Activated T-helper 1 cell treated with anti-CD3 and anti-CD28 coated beads, Interleukin-12 subunit alpha, Interleukin-12 subunit beta, Interleukin-2, Interleukin-4 antibody, amounts not matched to agents 30 ng/mL and 10 ng/mL and 1 ng/mL, durations not matched to agents 14 hours and 24 hours and 36 hours (primary cell): ENCODE measurements at regions of chr14 and their contacts with region 1.

Region 1: DNA sequence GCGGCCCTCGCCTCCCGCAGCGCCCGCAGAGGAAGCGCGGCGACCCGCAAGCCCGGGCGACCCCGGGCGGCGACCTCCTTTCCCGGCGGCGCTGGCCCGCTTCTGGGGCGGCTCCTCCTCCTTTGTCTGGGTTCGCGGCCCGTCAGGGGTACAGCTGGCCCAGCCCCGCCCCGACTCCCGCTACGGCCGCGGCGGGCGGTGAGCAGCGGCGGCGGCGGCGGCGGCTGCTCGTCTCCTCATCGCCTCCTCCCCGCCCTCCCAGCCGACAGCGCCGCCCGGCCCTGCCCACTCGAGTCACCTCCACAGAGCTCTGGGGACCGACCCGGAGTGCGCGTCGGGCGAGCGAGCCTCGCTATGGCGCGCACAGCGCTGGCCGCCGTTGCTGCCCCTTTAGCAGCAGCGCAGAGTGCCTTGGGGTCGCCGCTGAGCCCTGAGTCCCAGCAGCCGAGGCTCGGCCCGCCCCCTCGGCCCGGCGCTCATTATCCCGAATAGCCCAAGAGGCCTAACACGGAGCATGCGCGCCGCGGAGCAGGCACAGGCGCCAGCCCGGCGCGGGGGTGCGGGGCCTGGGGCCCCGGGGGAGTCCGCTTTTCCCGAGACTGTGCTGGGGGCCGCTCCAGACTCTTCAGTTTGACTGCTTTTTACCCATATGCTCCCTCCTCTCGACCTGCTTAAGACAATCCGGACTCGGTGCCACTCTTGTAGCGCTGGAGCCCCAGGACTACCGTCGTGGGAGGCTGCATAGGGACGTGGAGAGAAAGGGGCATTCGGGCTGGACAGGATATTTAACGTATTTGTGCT is at the start of gene SOS2:
- DNase-seq: peak; percentile 82
- H3K4me3 Mint-ChIP-seq: peak within 1 kb of the TSS; percentile 86
- H3K27ac Mint-ChIP-seq: peak within 1 kb of the TSS; percentile 89
- H3K4me1 Mint-ChIP-seq: peaks cover 44% of the 10 kb centered on the region
- H3K27me3 Mint-ChIP-seq: no peaks in the 10 kb centered on the region
- total RNA-seq, gene SOS2: 19.9 and 21.6 TPM in 2 replicates

Region 2: GRCh38 chr14:49585803-49586672 is 645.6 kb before region 1 on chr14 and contains the start of gene RPS29:
- intact Hi-C with region 1: loop called (anchors 5 kb)
- DNase-seq: peak; percentile 97
- H3K4me3 Mint-ChIP-seq: peak within 1 kb of the TSS; percentile 93
- H3K27ac Mint-ChIP-seq: peak within 1 kb of the TSS; percentile 99
- H3K4me1 Mint-ChIP-seq: peaks cover 46% of the 10 kb centered on the region
- H3K27me3 Mint-ChIP-seq: peaks cover 3% of the 10 kb centered on the region
- total RNA-seq, gene RPS29: 1,860 and 1,913 TPM in 2 replicates

Region 3: DNA sequence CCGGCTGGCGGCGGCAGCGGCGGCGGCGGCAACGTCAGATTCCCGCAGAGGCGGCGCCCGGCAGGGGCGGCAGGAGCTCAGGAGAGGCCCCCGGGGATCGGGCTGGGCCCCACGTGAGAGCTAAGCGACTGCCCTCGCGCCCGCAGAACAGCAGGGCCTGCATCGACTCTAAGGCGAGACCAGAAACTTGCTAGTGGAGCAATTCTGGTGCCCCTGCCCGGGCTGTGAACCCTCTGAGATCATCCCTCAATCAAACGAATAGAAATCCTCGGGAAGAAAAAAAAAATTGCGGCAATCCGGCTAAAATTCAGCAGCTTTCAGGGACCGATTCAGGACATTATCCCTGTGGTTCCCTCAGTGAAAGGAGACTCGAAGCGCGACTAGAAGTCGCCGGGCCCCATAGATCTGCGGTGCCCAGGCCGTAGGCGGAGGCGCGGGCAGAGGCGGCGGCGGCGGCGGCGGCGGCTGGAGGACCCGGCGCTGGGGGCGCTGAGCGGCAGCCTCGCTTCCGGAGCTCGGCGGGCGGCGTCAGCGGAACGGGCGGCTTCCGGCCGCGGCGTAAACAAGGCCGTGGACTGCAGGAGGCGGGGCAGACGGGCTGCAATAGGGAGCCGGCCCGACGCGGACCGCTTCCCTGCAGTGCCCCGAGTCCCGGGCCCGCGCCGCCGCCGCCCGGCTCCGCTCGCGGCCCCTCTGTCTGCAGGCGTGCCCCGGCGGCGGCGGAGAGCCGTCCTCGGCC is 463.9 kb before region 1 on chr14 and contains the start of gene KLHDC2:
- intact Hi-C with region 1: loop called (anchors 2 kb)
- DNase-seq: peak; percentile 89
- H3K4me3 Mint-ChIP-seq: peak within 1 kb of the TSS; percentile 99
- H3K27ac Mint-ChIP-seq: peak within 1 kb of the TSS; percentile 100
- H3K4me1 Mint-ChIP-seq: peaks cover 33% of the 10 kb centered on the region
- H3K27me3 Mint-ChIP-seq: peaks cover 2% of the 10 kb centered on the region
- total RNA-seq, gene KLHDC2: 23.7 and 26.2 TPM in 2 replicates

Region 4: GRCh38 chr14:49971156-49972130 is 260.2 kb before region 1 on chr14:
- intact Hi-C with region 1: loop called (anchors 5 kb)
- DNase-seq: peak; percentile 48
- H3K4me3 Mint-ChIP-seq: peak overlapping the region; percentile 83
- H3K27ac Mint-ChIP-seq: peak overlapping the region; percentile 99
- H3K4me1 Mint-ChIP-seq: peaks cover 61% of the 10 kb centered on the region
- H3K27me3 Mint-ChIP-seq: no peaks in the 10 kb centered on the region

Region 5: DNA sequence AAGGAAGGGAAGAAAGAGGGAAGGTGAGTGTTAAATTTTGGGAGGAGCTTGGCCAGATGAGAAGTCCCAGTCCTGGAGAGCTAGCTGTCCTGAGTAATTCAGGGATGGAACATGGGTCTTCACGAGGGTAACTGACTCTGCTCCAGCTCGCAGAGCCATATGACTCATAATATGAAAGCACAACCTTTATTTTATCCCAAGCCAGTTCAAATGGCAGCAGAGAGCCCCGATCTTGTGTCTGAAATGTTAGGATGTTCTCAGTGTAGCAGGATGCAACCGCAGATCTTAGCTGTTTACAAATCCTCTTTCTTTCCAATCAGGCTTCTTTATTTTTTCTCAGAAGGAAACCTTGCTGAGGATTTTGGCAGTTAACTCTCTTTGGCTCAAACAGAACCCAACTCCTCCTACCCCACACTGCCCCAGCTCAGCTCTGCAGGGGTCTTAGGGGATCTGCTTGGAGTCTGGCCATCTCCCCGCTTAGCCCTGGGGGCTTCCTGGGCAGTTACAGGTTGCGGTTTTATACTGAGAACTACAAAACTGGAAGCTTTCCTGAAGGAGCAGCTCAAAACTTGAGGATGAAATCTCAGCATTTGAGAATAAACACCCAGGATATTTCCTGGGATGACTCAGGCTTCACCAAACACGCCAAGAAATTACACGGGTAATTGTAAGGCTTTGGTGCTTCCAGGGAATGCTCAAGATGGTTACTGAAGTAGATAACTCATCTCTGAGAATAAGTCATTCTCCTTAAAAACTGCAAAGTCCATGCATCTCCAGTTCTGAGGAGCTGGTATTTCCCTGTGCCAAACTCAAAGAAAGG is 207.8 kb before region 1 on chr14:
- intact Hi-C with region 1: no loop called
- DNase-seq: no peak
- H3K4me3 Mint-ChIP-seq: no peak overlapping the region
- H3K27ac Mint-ChIP-seq: no peak overlapping the region
- H3K4me1 Mint-ChIP-seq: peaks cover 35% of the 10 kb centered on the region
- H3K27me3 Mint-ChIP-seq: no peaks in the 10 kb centered on the region

Region 6: GRCh38 chr14:50085570-50086320 is 145.9 kb before region 1 on chr14:
- intact Hi-C with region 1: no loop called
- DNase-seq: no peak
- H3K4me3 Mint-ChIP-seq: peak overlapping the region; percentile 38
- H3K27ac Mint-ChIP-seq: peak overlapping the region; percentile 90
- H3K4me1 Mint-ChIP-seq: peaks cover 87% of the 10 kb centered on the region
- H3K27me3 Mint-ChIP-seq: no peaks in the 10 kb centered on the region

Region 7: DNA sequence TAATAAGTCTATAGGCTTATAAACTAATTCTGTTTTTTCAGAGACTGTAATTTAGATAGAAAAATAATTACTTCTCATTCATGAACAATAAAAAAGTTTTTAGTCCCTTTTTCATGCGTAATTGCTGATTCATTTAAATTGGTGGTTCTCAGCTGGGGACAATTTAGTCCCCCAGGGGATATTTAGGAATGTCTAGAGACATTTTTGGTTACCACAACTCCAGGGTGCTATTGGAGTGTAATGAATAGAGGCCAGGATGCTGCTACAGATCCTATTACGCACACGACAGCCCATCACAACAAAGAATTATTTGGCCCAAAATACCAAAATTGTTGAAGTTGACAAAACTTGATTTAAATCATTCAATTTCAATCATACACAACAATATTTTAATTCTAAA is 92.5 kb before region 1 on chr14:
- intact Hi-C with region 1: no loop called
- DNase-seq: no peak
- H3K4me3 Mint-ChIP-seq: no peak overlapping the region
- H3K27ac Mint-ChIP-seq: no peak overlapping the region
- H3K4me1 Mint-ChIP-seq: no peaks in the 10 kb centered on the region
- H3K27me3 Mint-ChIP-seq: no peaks in the 10 kb centered on the region

Region 8: GRCh38 chr14:50156111-50156510 is 75.6 kb before region 1 on chr14:
- intact Hi-C with region 1: no loop called
- DNase-seq: no peak
- H3K4me3 Mint-ChIP-seq: no peak overlapping the region
- H3K27ac Mint-ChIP-seq: no peak overlapping the region
- H3K4me1 Mint-ChIP-seq: no peaks in the 10 kb centered on the region
- H3K27me3 Mint-ChIP-seq: no peaks in the 10 kb centered on the region

Region 9: GRCh38 chr14:50311975-50312733 is 80.5 kb after region 1 on chr14 and contains the starts of genes DMAC2L and L2HGDH:
- intact Hi-C with region 1: loop called (anchors 1 kb)
- DNase-seq: peak; percentile 92
- H3K4me3 Mint-ChIP-seq: peak within 1 kb of the TSS; percentile 92
- H3K27ac Mint-ChIP-seq: peak within 1 kb of the TSS; percentile 99
- H3K4me1 Mint-ChIP-seq: peaks cover 46% of the 10 kb centered on the region
- H3K27me3 Mint-ChIP-seq: peaks cover 2% of the 10 kb centered on the region
- total RNA-seq, gene DMAC2L: 14.4 and 17.9 TPM in 2 replicates
- total RNA-seq, gene L2HGDH: 14.7 and 16.2 TPM in 2 replicates

Region 10: GRCh38 chr14:50736932-50737419 is 505.3 kb after region 1 on chr14:
- intact Hi-C with region 1: loop called (anchors 5 kb)
- DNase-seq: peak; percentile 18
- H3K4me3 Mint-ChIP-seq: no peak overlapping the region
- H3K27ac Mint-ChIP-seq: peak overlapping the region; percentile 87
- H3K4me1 Mint-ChIP-seq: peaks cover 45% of the 10 kb centered on the region
- H3K27me3 Mint-ChIP-seq: no peaks in the 10 kb centered on the region